ENCODE measurements at regions of chr17 and their contacts with region 1.

Region 1: DNA sequence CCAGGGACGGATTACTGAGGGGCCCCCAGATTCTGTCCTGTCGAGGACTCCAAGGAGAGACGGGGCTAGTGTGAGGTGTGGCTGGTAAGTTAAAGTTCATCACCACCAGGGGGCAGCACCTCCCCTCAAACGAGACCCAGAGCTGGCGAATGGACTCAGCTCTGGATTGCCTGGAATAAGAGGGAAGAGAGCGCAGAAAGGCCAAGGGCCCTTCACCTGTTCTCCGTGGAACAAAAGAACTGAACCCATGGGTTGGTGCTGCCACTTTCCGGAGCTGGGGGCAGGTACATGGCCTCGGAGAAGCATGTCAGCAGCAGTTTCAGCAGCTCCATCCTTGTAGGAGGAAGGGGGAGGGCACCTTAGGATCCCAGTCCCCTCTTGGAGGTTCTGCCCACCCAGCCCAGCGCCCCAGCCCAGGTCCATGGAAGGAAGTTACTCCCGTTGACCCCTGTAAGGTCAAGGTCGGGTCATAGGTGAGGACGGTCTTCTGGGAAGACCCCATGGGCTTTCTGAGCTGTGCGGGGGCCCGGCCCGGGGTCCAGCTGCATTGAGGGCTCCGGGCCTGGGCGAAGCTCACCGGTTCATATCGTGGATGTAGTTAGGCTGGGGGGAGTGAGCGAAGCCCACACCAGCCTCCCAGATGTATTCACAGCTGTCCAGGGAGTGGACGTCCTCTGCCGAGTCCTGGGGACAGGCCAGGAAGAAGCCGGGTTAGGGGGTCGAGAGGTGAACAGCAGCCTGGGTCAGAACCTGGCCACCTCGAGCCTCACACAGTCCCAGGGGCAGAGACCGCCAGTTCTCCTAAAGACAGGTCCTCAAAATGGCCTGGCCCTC is 10.7 kb downstream of the HID1 start:
- DNase-seq: peak; percentile 81 to 92 (median 84)
- ATAC-seq: peak; percentile 87
- H3K4me3 ChIP-seq: no peak overlapping the region
- H3K27ac ChIP-seq: no peak overlapping the region
- H3K4me1 ChIP-seq: peaks cover 10 to 49% of the 10 kb centered on the region in 2 experiments; a peak in 4 of 5 replicates
- H3K27me3 ChIP-seq: no peaks in the 10 kb centered on the region
- CTCF ChIP-seq: peak; percentile 74 to 85 (median 84)
- EP300 ChIP-seq: no peak
- POLR2A ChIP-seq: no peak
- RAD21 ChIP-seq: peak; percentile 96 to 99

Region 2: DNA sequence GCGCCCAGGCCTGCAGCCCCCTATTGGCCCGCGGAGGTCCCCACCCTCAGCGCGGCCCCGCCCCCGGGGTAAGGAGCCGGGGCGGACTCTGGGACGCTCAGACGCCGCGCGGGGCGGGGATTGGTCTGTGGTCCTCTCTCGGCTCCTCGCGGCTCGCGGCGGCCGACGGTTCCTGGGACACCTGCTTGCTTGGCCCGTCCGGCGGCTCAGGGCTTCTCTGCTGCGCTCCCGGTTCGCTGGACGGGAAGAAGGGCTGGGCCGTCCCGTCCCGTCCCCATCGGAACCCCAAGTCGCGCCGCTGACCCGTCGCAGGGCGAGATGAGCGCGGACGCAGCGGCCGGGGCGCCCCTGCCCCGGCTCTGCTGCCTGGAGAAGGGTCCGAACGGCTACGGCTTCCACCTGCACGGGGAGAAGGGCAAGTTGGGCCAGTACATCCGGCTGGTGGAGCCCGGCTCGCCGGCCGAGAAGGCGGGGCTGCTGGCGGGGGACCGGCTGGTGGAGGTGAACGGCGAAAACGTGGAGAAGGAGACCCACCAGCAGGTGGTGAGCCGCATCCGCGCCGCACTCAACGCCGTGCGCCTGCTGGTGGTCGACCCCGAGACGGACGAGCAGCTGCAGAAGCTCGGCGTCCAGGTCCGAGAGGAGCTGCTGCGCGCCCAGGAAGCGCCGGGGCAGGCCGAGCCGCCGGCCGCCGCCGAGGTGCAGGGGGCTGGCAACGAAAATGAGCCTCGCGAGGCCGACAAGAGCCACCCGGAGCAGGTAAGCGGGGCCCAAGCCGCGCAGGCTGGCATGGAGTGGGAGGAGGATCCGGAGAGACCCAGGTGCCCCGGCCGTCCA is 213.1 kb before region 1 on chr17 and contains the start of gene NHERF1:
- CTCF ChIA-PET with region 1: interaction called, 4 read pairs
- POLR2A ChIA-PET with region 1: interaction called, 4 read pairs
- in situ Hi-C with region 1: loop called (anchors 5 kb)
- intact Hi-C with region 1: loop called (anchors 1 kb)
- DNase-seq: peak; percentile 95 to 97 (median 96)
- ATAC-seq: peak; percentile 96
- H3K4me3 ChIP-seq: peak within 1 kb of the TSS; percentile 93
- H3K27ac ChIP-seq: peak within 1 kb of the TSS; percentile 68
- H3K4me1 ChIP-seq: peaks cover 40 to 68% of the 10 kb centered on the region in 2 experiments
- H3K27me3 ChIP-seq: no peaks in the 10 kb centered on the region
- CTCF ChIP-seq: peak; percentile 22 to 78 (median 31); a peak in 4 of 6 replicates
- EP300 ChIP-seq: no peak
- POLR2A ChIP-seq: peak; percentile 89
- RAD21 ChIP-seq: peak in 1 of 2 experiments; percentile 27; a peak in 2 of 4 replicates
- polyA plus RNA-seq, gene NHERF1: 11.4 to 20.6 TPM

Region 3: GRCh38 chr17:74864866-74865395 is 96.9 kb before region 1 on chr17:
- CTCF ChIA-PET with region 1: no interaction called
- POLR2A ChIA-PET with region 1: interaction called, 4 read pairs
- in situ Hi-C with region 1: no loop called
- intact Hi-C with region 1: loop called (anchors 5 kb)
- DNase-seq: peak; percentile 57 to 83 (median 70)
- ATAC-seq: peak; percentile 74
- H3K4me3 ChIP-seq: no peak overlapping the region
- H3K27ac ChIP-seq: 0 out of 3 replicates have a peak overlapping the region, but pooled peaks have one; percentile 31
- H3K4me1 ChIP-seq: peaks cover 40 to 85% of the 10 kb centered on the region in 2 experiments
- H3K27me3 ChIP-seq: no peaks in the 10 kb centered on the region
- CTCF ChIP-seq: peak; percentile 90 to 98 (median 90)
- EP300 ChIP-seq: no peak
- POLR2A ChIP-seq: no peak
- RAD21 ChIP-seq: peak; percentile 71 to 85

Region 4: DNA sequence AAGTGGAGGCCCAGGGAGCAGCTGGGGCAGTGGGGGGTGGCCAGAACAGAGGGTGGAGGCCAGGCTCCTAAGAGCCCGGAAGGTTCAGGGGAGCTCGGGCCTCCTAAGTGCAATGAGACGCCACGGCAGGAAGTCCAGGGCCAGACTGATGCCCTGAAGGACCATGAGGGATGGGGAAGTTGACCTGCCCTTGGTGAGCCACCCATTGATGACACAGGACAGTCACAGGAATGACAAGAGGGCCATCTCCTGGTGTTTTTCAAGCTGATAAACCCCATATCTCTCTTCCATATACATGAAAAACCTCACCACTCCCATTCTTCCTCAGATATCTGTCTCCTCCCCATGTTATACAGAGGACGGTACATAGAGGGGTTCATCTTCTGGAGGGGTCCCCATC is 44.8 kb after region 1 on chr17:
- CTCF ChIA-PET with region 1: interaction called, 40 read pairs
- POLR2A ChIA-PET with region 1: interaction called, 16 read pairs
- in situ Hi-C with region 1: no loop called
- intact Hi-C with region 1: loop called (anchors 1 kb)
- DNase-seq: peak; percentile 45 to 69 (median 62)
- ATAC-seq: peak; percentile 83
- H3K4me3 ChIP-seq: no peak overlapping the region
- H3K27ac ChIP-seq: no peak overlapping the region
- H3K4me1 ChIP-seq: peaks cover 11 to 25% of the 10 kb centered on the region in 2 experiments; a peak in 4 of 5 replicates
- H3K27me3 ChIP-seq: no peaks in the 10 kb centered on the region
- CTCF ChIP-seq: peak; percentile 60 to 80 (median 61)
- EP300 ChIP-seq: no peak
- POLR2A ChIP-seq: no peak
- RAD21 ChIP-seq: peak; percentile 89 to 96

Region 5: DNA sequence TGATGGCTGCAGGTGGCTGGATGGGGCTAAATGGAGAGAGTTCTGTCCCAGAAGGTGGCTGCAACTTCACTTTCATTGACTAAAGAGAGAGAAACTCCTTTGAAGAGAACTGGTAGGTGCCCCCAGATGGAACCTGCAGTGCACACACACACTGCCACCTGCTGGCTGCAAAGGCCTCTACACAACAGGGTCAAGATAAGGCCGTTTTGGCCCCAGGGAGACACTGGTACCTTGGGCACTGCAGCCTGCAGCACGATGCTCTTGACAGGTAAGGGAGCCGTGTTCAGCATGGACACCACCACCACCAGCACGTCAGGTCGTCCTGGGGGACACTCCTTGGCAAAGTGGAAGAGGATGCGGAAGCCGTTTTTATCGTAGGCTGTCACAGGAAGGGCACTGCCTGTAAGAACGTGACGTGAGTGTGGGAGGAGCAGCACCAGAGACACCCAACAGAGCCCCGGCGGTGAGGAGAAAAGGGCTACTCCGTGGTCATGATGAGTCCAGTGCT is 276.9 kb after region 1 on chr17:
- CTCF ChIA-PET with region 1: interaction called, 10 read pairs
- POLR2A ChIA-PET with region 1: interaction called, 6 read pairs
- in situ Hi-C with region 1: no loop called
- intact Hi-C with region 1: no loop called
- DNase-seq: peak; percentile 69 to 80 (median 76)
- ATAC-seq: peak; percentile 81
- H3K4me3 ChIP-seq: no peak overlapping the region
- H3K27ac ChIP-seq: no peak overlapping the region
- H3K4me1 ChIP-seq: peaks cover 14 to 33% of the 10 kb centered on the region in 2 experiments
- H3K27me3 ChIP-seq: no peaks in the 10 kb centered on the region
- CTCF ChIP-seq: peak; percentile 88 to 94 (median 88)
- EP300 ChIP-seq: no peak
- POLR2A ChIP-seq: peak; percentile 58
- RAD21 ChIP-seq: peak; percentile 41 to 78